OCI-LY7 (cell line): ENCODE measurements at regions of chr3 and their contacts with region 1.

Region 1: GRCh38 chr3:58532794-58533220 is 4.2 kb downstream of the ACOX2 start:
- DNase-seq: peak; percentile 89
- H3K4me3 ChIP-seq: no peak overlapping the region
- H3K27ac ChIP-seq: no peak overlapping the region
- H3K4me1 ChIP-seq: peaks cover 9% of the 10 kb centered on the region
- CTCF ChIP-seq: peak; percentile 94

Region 2: DNA sequence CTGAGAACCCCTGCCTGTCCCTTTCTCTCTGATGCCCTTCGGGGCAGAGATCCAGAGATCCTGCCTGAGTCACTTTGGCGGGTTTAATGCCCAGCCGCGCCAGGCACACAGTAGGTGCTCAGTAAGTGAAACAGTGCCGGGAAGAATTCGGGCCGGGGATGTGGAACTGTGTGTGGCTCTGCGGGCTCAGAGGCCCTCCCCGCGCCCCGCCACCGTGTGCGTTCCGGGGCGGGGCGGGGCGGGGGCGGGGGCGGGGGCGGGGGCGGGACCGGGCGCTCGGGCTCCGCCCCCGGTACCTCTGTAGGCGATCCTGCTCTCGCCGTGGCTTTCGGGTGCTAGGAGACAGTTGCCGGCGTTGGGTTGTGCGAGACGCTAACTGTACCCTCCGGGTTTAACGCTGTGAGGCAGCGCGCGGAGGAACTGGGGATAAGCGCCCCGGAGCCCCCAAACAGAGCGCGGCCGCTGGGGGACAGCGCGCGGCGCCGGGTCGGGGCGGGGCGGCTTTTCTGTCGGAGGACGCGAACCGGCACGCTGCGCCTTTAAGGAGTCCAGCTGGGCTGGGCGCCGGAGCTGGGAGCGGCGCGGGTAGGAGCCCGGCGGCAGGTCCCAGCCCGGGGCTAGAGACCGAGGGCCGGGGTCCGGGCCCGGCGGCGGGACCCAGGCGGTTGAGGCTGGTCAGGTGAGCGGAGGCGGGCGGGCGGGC is 295.4 kb before region 1 on chr3 and contains the start of gene ABHD6:
- CTCF ChIA-PET with region 1: no interaction called
- POLR2A ChIA-PET with region 1: no interaction called
- intact Hi-C with region 1: loop called (anchors 5 kb)
- DNase-seq: peak; percentile 86
- H3K4me3 ChIP-seq: peak within 1 kb of the TSS; percentile 80
- H3K27ac ChIP-seq: peak within 1 kb of the TSS; percentile 50
- H3K4me1 ChIP-seq: peaks cover 25% of the 10 kb centered on the region
- CTCF ChIP-seq: peak; percentile 59
- total RNA-seq, gene ABHD6: 5.8 TPM in 2 replicates

Region 3: GRCh38 chr3:58305882-58306711 is 226.7 kb before region 1 on chr3 and contains the starts of genes HTD2 and RPP14:
- CTCF ChIA-PET with region 1: no interaction called
- POLR2A ChIA-PET with region 1: interaction called, 9 read pairs
- intact Hi-C with region 1: loop called (anchors 1 kb)
- DNase-seq: peak; percentile 99
- H3K4me3 ChIP-seq: peak within 1 kb of the TSS; percentile 82
- H3K27ac ChIP-seq: peak within 1 kb of the TSS; percentile 81
- H3K4me1 ChIP-seq: peaks cover 16% of the 10 kb centered on the region
- CTCF ChIP-seq: peak; percentile 87
- total RNA-seq, gene HTD2: 6.4 and 10.0 TPM in 2 replicates
- total RNA-seq, gene RPP14: 10.2 and 12.8 TPM in 2 replicates

Region 4: GRCh38 chr3:58324391-58325390 is 208.1 kb before region 1 on chr3:
- CTCF ChIA-PET with region 1: no interaction called
- POLR2A ChIA-PET with region 1: no interaction called
- intact Hi-C with region 1: loop called (anchors 2 kb)
- DNase-seq: no peak
- H3K4me3 ChIP-seq: no peak overlapping the region
- H3K27ac ChIP-seq: no peak overlapping the region
- H3K4me1 ChIP-seq: peaks cover 32% of the 10 kb centered on the region
- CTCF ChIP-seq: no peak

Region 5: DNA sequence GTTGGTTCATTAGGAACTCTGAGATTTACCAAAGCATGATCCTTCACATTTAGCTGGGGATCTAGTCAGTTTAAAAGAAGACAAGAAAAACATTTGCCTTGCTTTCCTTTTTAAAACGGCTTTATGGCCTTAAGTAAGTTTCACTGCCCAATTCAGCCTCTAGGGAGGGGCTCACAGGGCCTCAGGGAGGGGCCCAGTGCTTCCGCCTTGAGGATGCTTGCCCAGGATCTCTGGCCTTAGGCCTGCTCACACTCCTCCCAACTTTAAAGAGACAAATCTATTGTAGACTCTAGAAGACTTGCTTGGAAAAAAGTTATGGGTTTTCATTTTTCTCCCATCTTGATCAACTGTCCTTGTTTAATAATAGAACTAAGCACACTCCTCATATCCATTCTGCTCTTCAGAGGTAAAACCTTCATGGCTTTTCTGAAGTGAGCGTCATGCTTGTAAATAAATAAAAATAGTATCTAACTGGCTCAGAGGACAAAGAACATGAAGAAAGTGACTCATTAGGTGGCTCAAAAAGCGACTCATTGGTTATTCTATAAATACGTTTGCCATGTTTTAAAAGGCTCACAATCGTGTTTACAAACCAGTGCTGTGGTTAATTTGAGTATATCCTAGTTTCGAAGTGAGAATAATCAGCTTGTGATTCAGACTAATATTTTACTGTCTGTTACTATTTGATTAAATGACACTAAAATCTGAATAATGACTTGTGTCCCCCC is 112.9 kb before region 1 on chr3:
- CTCF ChIA-PET with region 1: no interaction called
- POLR2A ChIA-PET with region 1: no interaction called
- intact Hi-C with region 1: loop called (anchors 10 kb)
- DNase-seq: no peak
- H3K4me3 ChIP-seq: no peak overlapping the region
- H3K27ac ChIP-seq: no peak overlapping the region
- H3K4me1 ChIP-seq: no peaks in the 10 kb centered on the region
- CTCF ChIP-seq: no peak

Region 6: GRCh38 chr3:58463181-58463941 is 69.4 kb before region 1 on chr3:
- CTCF ChIA-PET with region 1: no interaction called
- POLR2A ChIA-PET with region 1: interaction called, 4 read pairs
- intact Hi-C with region 1: loop called (anchors 1 kb)
- DNase-seq: peak; percentile 78
- H3K4me3 ChIP-seq: no peak overlapping the region
- H3K27ac ChIP-seq: no peak overlapping the region
- H3K4me1 ChIP-seq: peaks cover 5% of the 10 kb centered on the region
- CTCF ChIP-seq: peak; percentile 98

Region 7: GRCh38 chr3:58491506-58492402 is 41.1 kb before region 1 on chr3 and contains the start of gene KCTD6:
- CTCF ChIA-PET with region 1: interaction called, 3 read pairs
- POLR2A ChIA-PET with region 1: interaction called, 4 read pairs
- intact Hi-C with region 1: loop called (anchors 1 kb)
- DNase-seq: peak; percentile 96
- H3K4me3 ChIP-seq: peak within 1 kb of the TSS; percentile 77
- H3K27ac ChIP-seq: peak within 1 kb of the TSS; percentile 25
- H3K4me1 ChIP-seq: peaks cover 48% of the 10 kb centered on the region
- CTCF ChIP-seq: peak; percentile 68
- total RNA-seq, gene KCTD6: 12.6 and 17.1 TPM in 2 replicates